Activated CD4-positive, alpha-beta memory T cell treated with anti-CD3 and anti-CD28 coated beads, Interleukin-2, amount 10 ng/mL, durations not matched to agents 7 days and 5 days (primary cell): ENCODE measurements at regions of chr4 and their contacts with region 1.

Region 1: GRCh38 chr4:80125252-80126177 is 52.5 kb upstream of the ANTXR2 start:
- DNase-seq: peak; percentile 50
- H3K4me3 Mint-ChIP-seq: peak overlapping the region; percentile 28
- H3K27ac Mint-ChIP-seq: peak overlapping the region; percentile 88
- H3K4me1 Mint-ChIP-seq: peaks cover 63% of the 10 kb centered on the region
- H3K27me3 Mint-ChIP-seq: no peaks in the 10 kb centered on the region

Region 2: DNA sequence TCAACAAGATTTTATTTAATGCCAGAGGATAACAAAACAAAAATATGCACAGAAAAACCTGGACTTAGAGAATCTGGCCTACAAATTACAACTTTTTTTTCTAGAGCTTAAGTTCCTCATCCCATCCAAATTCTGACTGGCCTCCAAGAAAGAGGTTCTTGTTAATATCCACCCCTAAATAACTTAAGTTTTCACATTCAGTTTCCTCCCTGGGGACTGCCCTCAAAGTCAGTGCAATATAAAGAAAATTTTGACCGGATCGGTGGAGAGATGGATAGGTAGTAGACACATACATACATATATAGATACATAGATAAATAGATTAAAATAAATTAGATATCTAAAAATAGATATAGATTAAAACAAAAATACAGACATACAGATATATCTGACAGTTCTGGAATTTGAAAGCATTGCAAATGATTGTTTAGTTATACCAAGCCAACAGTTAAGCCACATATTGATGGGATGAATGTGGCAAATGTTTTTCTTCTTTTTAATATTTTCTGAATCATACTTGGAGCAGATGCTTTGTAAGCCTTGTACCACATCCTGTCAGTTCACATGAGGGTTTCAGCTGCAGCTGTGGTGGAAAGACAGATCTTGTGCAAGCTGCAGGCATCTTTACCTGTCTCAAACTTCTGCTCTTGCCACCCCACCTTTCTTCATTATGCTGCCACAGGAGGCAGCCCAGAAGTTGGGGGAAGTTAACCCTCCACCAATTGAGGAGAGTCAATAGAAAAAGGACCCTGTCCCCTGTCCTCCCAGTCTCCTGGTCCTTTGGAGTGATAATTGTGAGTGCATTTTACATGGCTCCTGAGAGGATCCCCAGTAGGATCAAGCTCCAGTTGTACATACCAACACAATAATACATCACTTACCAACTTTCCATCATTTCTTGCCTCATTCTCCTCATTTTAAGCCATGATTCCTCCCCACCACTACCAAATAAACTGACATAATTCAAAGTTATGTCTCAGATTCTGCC is 13.3 kb after region 1 on chr4:
- CTCF ChIA-PET with region 1: interaction called, 45 read pairs
- POLR2A ChIA-PET with region 1: interaction called, 110 read pairs
- DNase-seq: peak; percentile 79
- H3K4me3 Mint-ChIP-seq: peak overlapping the region; percentile 18
- H3K27ac Mint-ChIP-seq: peak overlapping the region; percentile 88
- H3K4me1 Mint-ChIP-seq: peaks cover 63% of the 10 kb centered on the region
- H3K27me3 Mint-ChIP-seq: no peaks in the 10 kb centered on the region

Region 3: GRCh38 chr4:80173401-80173800 is 47.9 kb after region 1 on chr4:
- CTCF ChIA-PET with region 1: interaction called, 58 read pairs
- POLR2A ChIA-PET with region 1: interaction called, 110 read pairs
- DNase-seq: peak; percentile 71
- H3K4me3 Mint-ChIP-seq: peak overlapping the region; percentile 55
- H3K27ac Mint-ChIP-seq: peak overlapping the region; percentile 97
- H3K4me1 Mint-ChIP-seq: peaks cover 56% of the 10 kb centered on the region
- H3K27me3 Mint-ChIP-seq: no peaks in the 10 kb centered on the region

Region 4: DNA sequence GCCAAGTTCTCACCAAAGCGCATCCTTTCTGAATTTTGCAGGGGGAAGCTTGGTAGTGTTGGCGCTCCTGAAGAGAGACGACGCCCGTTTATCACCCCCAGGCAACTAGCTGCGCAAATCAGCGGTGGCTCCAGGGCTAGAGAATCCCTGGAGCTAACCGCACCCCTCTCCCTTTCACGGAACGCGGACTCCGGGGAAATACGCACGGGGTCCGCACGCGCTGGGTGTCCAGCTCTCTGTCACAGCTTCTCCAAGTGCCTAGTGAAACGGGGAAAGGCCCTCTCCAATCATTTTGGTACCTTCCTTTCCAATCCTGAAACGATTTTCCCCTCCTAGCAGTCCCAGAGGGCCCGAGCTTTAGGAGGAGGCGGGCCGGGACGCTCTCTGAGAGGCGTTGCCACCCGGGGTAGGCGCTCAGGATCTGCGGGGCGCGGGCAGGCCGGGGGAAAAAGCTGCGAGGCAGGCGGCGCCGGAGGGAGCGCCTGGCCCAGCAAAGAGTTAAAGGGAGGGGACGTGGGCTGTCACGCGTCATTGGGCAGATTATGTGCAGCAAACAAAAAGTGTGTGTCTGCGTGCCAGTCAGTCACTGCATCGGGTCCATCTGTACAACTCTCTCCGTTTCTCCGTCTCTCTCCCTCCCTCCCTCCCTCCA is 71.5 kb after region 1 on chr4 and contains the start of gene PRDM8:
- CTCF ChIA-PET with region 1: interaction called, 31 read pairs
- POLR2A ChIA-PET with region 1: interaction called, 33 read pairs
- DNase-seq: no peak
- H3K4me3 Mint-ChIP-seq: peak within 1 kb of the TSS; percentile 57
- H3K27ac Mint-ChIP-seq: no peak within 1 kb of the TSS
- H3K4me1 Mint-ChIP-seq: peaks cover 28% of the 10 kb centered on the region
- H3K27me3 Mint-ChIP-seq: peaks cover 14% of the 10 kb centered on the region
- total RNA-seq, gene PRDM8: 18.9 to 21.9 TPM

Region 5: DNA sequence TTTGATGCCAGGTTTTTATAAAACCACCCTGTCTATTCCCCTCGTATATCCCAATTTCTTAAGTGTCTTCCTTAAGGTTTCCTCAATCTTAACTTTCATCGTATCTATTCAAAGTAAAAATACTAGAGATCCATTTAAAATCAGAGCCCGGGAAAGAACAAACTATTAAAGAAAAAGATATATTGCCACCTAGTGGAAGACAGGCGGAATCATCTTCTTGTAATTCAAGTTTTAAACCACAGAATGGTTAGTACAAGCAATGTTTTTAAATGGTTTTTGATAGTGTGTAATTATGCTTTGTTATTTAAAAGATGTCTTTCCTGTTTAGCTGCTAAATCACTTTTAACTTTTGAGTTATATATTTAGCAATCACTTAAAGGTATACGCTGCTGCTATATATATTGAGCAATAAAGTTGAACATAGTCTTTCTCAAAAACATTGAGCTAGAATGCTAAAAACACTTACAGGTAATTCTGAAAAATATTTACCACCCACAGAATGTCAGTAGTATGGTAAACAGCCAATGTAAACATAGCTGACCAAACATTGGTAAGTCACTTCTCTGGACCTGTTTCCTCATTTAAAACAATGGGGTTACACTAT is 90.0 kb after region 1 on chr4:
- CTCF ChIA-PET with region 1: interaction called, 12 read pairs
- POLR2A ChIA-PET with region 1: no interaction called
- DNase-seq: no peak
- H3K4me3 Mint-ChIP-seq: no peak overlapping the region
- H3K27ac Mint-ChIP-seq: no peak overlapping the region
- H3K4me1 Mint-ChIP-seq: peaks cover 1% of the 10 kb centered on the region
- H3K27me3 Mint-ChIP-seq: peaks cover 40% of the 10 kb centered on the region

Region 6: DNA sequence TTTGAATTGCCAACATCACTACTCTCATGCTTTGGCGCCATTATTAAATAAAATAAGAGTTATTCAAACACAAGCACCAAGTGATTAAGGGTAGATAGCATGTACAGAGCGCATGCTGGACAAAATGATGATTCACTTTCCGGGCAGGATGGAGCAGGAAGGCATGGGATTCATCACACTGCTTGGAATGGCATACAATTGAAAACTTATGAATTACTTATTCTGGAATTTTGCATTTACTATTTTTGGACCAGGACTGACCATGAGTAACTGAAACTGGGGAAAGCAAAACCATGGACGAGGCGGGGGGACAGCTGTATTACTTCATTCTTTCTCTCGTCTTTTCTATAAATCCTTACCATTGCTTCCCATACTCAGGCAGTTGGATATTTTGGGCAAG is 112.5 kb after region 1 on chr4:
- CTCF ChIA-PET with region 1: no interaction called
- POLR2A ChIA-PET with region 1: no interaction called
- DNase-seq: no peak
- H3K4me3 Mint-ChIP-seq: no peak overlapping the region
- H3K27ac Mint-ChIP-seq: no peak overlapping the region
- H3K4me1 Mint-ChIP-seq: no peaks in the 10 kb centered on the region
- H3K27me3 Mint-ChIP-seq: peaks cover 15% of the 10 kb centered on the region

Region 7: GRCh38 chr4:80266253-80266901 is 140.9 kb after region 1 on chr4 and contains the start of gene FGF5:
- CTCF ChIA-PET with region 1: no interaction called
- POLR2A ChIA-PET with region 1: no interaction called
- DNase-seq: peak; percentile 27
- H3K4me3 Mint-ChIP-seq: peak within 1 kb of the TSS; percentile 33
- H3K27ac Mint-ChIP-seq: no peak within 1 kb of the TSS
- H3K4me1 Mint-ChIP-seq: peaks cover 24% of the 10 kb centered on the region
- H3K27me3 Mint-ChIP-seq: peaks cover 88% of the 10 kb centered on the region
- total RNA-seq, gene FGF5: not detected

Region 8: DNA sequence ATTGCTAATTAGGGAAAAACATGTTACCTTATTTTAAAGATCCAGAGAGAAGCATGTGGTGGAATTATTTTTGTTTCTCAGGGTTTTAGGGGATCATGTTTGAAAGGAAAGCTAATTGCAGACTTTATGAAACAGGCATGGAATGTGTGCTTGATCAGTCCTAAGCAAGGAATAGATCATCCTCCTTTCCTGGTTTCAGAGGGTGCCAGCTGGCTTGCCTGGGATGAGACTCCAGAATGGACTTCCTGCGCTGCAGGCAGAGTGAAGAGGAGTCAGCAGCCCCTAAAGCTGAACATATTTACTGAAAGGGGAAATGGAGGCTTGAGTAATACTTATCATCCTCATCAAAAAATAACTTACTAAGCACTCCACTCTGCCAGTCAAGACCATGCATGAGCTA is 154.2 kb after region 1 on chr4:
- CTCF ChIA-PET with region 1: no interaction called
- POLR2A ChIA-PET with region 1: no interaction called
- DNase-seq: no peak
- H3K4me3 Mint-ChIP-seq: no peak overlapping the region
- H3K27ac Mint-ChIP-seq: no peak overlapping the region
- H3K4me1 Mint-ChIP-seq: no peaks in the 10 kb centered on the region
- H3K27me3 Mint-ChIP-seq: peaks cover 8% of the 10 kb centered on the region